ENCODE measurements at regions of chr6 and their contacts with region 1.

Region 1: DNA sequence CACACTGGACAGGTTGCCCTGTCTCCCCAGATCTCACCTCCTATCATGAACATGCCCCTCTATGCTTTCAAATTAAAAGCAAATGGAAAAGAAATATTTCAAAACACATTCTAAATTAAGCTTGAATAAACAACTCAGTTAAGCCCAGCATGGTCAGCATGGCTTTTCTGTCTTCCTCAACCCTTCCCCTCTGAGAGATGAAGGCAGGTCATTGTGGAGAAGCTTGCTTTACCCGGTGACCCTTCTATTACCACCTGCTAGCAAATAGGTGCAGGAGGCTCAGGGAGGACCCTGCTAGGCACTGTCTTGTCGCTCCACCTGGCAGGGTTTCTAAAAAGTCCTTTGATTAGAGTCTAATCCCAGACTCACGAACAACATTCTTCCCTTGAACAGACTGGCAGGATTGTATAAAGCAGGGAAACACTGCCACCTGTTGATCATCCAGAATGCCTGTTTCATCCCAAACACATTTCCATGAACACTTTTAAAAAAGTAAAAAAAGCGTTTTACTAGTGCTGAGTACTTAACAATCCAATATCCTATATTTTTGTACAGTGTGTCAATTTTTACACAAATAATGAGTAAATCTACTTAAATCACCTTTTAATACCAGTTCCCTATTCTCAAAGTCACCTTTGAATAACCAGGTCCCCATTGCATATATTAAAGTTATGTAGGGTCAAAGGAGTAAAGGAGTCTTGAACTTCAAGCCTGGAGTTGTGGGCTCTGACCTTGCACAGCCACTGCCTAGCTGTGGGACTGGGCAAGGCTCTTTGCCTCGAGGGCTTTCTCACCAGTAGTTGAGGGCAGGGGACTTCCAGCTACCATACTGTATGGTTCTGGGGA is 75.5 kb downstream of the GPR6 start:
- DNase-seq: peak; percentile 22

Region 2: GRCh38 chr6:109705258-109705657 is 348.4 kb before region 1 on chr6:
- in situ Hi-C with region 1: loop called (anchors 25 kb)
- DNase-seq: peak; percentile 67

Region 3: GRCh38 chr6:110430236-110430635 is 376.6 kb after region 1 on chr6:
- in situ Hi-C with region 1: no loop called
- DNase-seq: no peak

Measured in Caki2 (cell line).